Naive thymus-derived CD4-positive, alpha-beta T cell (primary cell): ENCODE measurements at regions of chr18 and their contacts with region 1.

Region 1: GRCh38 chr18:23503038-23503962 is at the start of gene RMC1:
- DNase-seq: peak; percentile 91 to 99 (median 95)
- ATAC-seq: peak; percentile 96
- H3K4me3 ChIP-seq: peak within 1 kb of the TSS; percentile 95
- H3K4me3 Mint-ChIP-seq: peak within 1 kb of the TSS; percentile 91 to 99 (median 96)
- H3K27ac ChIP-seq: peak within 1 kb of the TSS; percentile 88
- H3K27ac Mint-ChIP-seq: peak within 1 kb of the TSS; percentile 93 to 99 (median 96)
- H3K4me1 ChIP-seq: peaks cover 22% of the 10 kb centered on the region in 2 donors
- H3K4me1 Mint-ChIP-seq: peaks cover 28 to 70% (median 64%) of the 10 kb centered on the region in 7 donors
- H3K27me3 ChIP-seq: no peaks in the 10 kb centered on the region
- H3K27me3 Mint-ChIP-seq: no peaks in the 10 kb centered on the region
- total RNA-seq, gene RMC1: 45.7 to 59.7 (median 50.0) TPM

Region 2: DNA sequence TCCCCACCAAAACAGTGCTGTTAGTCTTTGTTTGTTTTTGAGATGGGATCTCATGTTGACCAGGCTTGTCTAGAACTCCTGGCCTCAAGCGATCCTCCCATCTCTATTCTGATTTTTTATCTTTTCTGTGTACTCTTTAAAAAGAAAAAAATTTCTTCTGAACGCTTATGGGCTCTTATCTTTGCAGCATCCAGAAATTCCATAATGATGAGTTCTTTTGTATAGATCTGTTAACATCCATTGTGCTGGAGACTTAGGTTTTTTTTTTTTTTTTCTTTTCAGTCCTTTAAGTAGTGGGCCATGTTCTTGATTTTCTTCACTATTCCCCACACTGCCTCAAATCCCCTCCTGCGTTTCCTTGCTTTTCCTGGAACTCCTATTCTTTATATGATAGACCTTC is 539.2 kb before region 1 on chr18:
- CTCF ChIA-PET with region 1: no interaction called
- POLR2A ChIA-PET with region 1: no interaction called
- intact Hi-C with region 1: no loop called
- DNase-seq: no peak
- ATAC-seq: no peak
- H3K4me3 ChIP-seq: no peak overlapping the region
- H3K4me3 Mint-ChIP-seq: no peak overlapping the region
- H3K27ac ChIP-seq: no peak overlapping the region
- H3K27ac Mint-ChIP-seq: peak overlapping the region in 1 of 9 donors; percentile 7
- H3K4me1 ChIP-seq: no peaks in the 10 kb centered on the region
- H3K4me1 Mint-ChIP-seq: peaks cover 0 to 12% (median 0%) of the 10 kb centered on the region in 7 donors
- H3K27me3 ChIP-seq: peaks cover 0 to 2% of the 10 kb centered on the region in 2 donors
- H3K27me3 Mint-ChIP-seq: no peaks in the 10 kb centered on the region

Region 3: DNA sequence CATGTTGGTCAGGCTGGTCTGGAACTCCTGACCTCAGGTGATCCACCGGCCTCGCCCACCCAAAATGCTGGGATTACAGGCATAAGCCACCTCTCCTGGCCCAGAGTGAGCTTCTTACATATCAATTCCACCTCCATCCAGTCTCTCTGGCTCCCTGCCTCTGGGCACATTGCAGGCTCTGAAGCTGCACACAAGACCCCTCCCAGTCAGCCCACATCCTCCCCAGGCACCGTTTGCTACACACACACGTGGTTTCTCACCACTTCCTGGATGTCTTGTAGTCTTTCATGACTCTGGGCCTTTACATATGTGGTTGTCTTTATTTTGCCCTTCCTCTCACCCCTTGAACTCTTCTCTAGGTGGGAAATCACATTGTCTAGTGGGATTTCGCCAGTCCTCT is 432.0 kb before region 1 on chr18:
- CTCF ChIA-PET with region 1: no interaction called
- POLR2A ChIA-PET with region 1: no interaction called
- intact Hi-C with region 1: loop called in 1 of 2 experiments (anchors 2 kb)
- DNase-seq: peak; percentile 49 to 94 (median 92)
- ATAC-seq: peak; percentile 99
- H3K4me3 ChIP-seq: peak overlapping the region; percentile 12
- H3K4me3 Mint-ChIP-seq: peak overlapping the region; percentile 73 to 91 (median 78)
- H3K27ac ChIP-seq: peak overlapping the region; percentile 18
- H3K27ac Mint-ChIP-seq: peak overlapping the region; percentile 69 to 94 (median 91)
- H3K4me1 ChIP-seq: peaks cover 44 to 50% of the 10 kb centered on the region in 2 donors
- H3K4me1 Mint-ChIP-seq: peaks cover 46 to 83% (median 77%) of the 10 kb centered on the region in 7 donors
- H3K27me3 ChIP-seq: no peaks in the 10 kb centered on the region
- H3K27me3 Mint-ChIP-seq: peaks cover 0 to 3% (median 0%) of the 10 kb centered on the region in 5 donors

Region 4: DNA sequence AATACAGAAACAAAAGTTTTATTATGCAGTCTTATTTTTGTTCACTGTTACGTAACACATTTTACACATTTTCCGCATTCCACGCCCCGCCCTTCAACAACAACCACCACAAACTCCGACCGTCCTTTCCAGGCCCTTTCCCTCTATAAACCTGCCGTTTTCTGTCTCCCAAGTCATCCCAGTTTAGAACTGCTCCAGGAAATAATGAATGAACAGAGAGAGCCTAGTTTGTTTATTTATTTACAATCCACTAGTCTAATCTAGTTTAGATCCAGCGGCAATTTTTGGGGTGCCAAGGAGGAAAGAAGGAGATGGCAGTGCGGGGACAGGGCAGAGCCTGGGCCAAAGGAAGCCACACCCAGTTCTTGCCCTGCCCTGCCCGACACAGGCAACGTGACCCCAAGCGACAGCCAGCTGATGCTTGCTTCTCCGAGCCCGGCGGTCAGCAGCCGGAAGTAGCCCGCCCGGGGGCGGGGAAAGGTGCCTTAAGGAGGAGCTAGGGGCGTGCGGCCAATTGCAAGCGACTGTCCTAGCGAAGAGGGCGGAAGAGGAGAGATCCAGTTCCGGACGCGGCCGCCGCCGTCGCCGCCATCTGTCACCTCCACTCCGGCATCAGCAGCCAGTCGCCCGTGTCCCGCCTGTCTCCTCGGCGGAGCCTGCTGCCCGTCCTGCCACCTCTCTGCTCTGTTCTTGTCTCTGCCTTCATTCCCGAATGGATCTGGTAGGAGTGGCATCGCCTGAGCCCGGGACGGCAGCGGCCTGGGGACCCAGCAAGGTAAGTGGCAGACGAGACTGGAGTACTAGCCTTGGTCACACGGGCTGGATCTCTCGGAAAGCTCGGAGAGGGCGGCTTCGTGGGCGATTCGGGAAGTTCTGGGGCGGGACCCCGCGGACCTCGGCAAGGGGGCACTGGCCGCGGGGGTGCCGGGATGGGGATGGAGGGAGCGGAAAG is 50.3 kb before region 1 on chr18 and contains the start of gene RIOK3:
- CTCF ChIA-PET with region 1: no interaction called
- POLR2A ChIA-PET with region 1: interaction called, 11 read pairs
- intact Hi-C with region 1: loop called (anchors 1 kb)
- DNase-seq: peak; percentile 68 to 96 (median 74)
- ATAC-seq: peak; percentile 97
- H3K4me3 ChIP-seq: peak within 1 kb of the TSS; percentile 82
- H3K4me3 Mint-ChIP-seq: peak within 1 kb of the TSS; percentile 92 to 100 (median 98)
- H3K27ac ChIP-seq: peak within 1 kb of the TSS; percentile 90
- H3K27ac Mint-ChIP-seq: peak within 1 kb of the TSS; percentile 91 to 99 (median 96)
- H3K4me1 ChIP-seq: peaks cover 13 to 25% of the 10 kb centered on the region in 2 donors
- H3K4me1 Mint-ChIP-seq: peaks cover 22 to 55% (median 47%) of the 10 kb centered on the region in 7 donors
- H3K27me3 ChIP-seq: no peaks in the 10 kb centered on the region
- H3K27me3 Mint-ChIP-seq: peaks cover 0 to 7% (median 0%) of the 10 kb centered on the region in 5 donors
- total RNA-seq, gene RIOK3: 74.0 to 153 (median 78.2) TPM

Region 5: GRCh38 chr18:23586249-23587196 is 83.2 kb after region 1 on chr18 and contains the start of gene NPC1:
- CTCF ChIA-PET with region 1: interaction called, 4 read pairs
- POLR2A ChIA-PET with region 1: interaction called, 12 read pairs
- intact Hi-C with region 1: loop called (anchors 1 kb)
- DNase-seq: peak; percentile 88 to 95 (median 93)
- ATAC-seq: peak; percentile 93
- H3K4me3 ChIP-seq: peak within 1 kb of the TSS; percentile 76
- H3K4me3 Mint-ChIP-seq: peak within 1 kb of the TSS; percentile 79 to 96 (median 92)
- H3K27ac ChIP-seq: peak within 1 kb of the TSS; percentile 100
- H3K27ac Mint-ChIP-seq: peak within 1 kb of the TSS; percentile 84 to 97 (median 94)
- H3K4me1 ChIP-seq: peaks cover 9 to 25% of the 10 kb centered on the region in 2 donors
- H3K4me1 Mint-ChIP-seq: peaks cover 25 to 45% (median 37%) of the 10 kb centered on the region in 7 donors
- H3K27me3 ChIP-seq: no peaks in the 10 kb centered on the region
- H3K27me3 Mint-ChIP-seq: peaks cover 0 to 13% (median 0%) of the 10 kb centered on the region in 5 donors
- total RNA-seq, gene NPC1: 29.2 to 49.3 (median 31.4) TPM

Region 6: GRCh38 chr18:23828426-23828825 is 325.1 kb after region 1 on chr18:
- CTCF ChIA-PET with region 1: no interaction called
- POLR2A ChIA-PET with region 1: no interaction called
- intact Hi-C with region 1: loop called (anchors 5 kb)
- DNase-seq: peak in 7 of 9 donors; percentile 13 to 74 (median 57)
- ATAC-seq: peak; percentile 99
- H3K4me3 ChIP-seq: no peak overlapping the region
- H3K4me3 Mint-ChIP-seq: peak overlapping the region in 1 of 10 donors; percentile 47
- H3K27ac ChIP-seq: no peak overlapping the region
- H3K27ac Mint-ChIP-seq: peak overlapping the region in 7 of 9 donors; percentile 2 to 86 (median 55)
- H3K4me1 ChIP-seq: peaks cover 0 to 10% of the 10 kb centered on the region in 2 donors
- H3K4me1 Mint-ChIP-seq: peaks cover 0 to 40% (median 23%) of the 10 kb centered on the region in 7 donors
- H3K27me3 ChIP-seq: no peaks in the 10 kb centered on the region
- H3K27me3 Mint-ChIP-seq: no peaks in the 10 kb centered on the region

Region 7: GRCh38 chr18:24118750-24119577 is 615.7 kb after region 1 on chr18:
- CTCF ChIA-PET with region 1: no interaction called
- POLR2A ChIA-PET with region 1: no interaction called
- intact Hi-C with region 1: loop called (anchors 5 kb)
- DNase-seq: peak; percentile 49 to 82 (median 74)
- ATAC-seq: peak; percentile 98
- H3K4me3 ChIP-seq: no peak overlapping the region
- H3K4me3 Mint-ChIP-seq: no peak overlapping the region
- H3K27ac ChIP-seq: no peak overlapping the region
- H3K27ac Mint-ChIP-seq: peak overlapping the region in 7 of 9 donors; percentile 2 to 82 (median 61)
- H3K4me1 ChIP-seq: peaks cover 0 to 6% of the 10 kb centered on the region in 2 donors
- H3K4me1 Mint-ChIP-seq: peaks cover 1 to 41% (median 22%) of the 10 kb centered on the region in 7 donors
- H3K27me3 ChIP-seq: no peaks in the 10 kb centered on the region
- H3K27me3 Mint-ChIP-seq: no peaks in the 10 kb centered on the region

Region 8: GRCh38 chr18:24633121-24633520 is 1129.8 kb after region 1 on chr18:
- CTCF ChIA-PET with region 1: no interaction called
- POLR2A ChIA-PET with region 1: no interaction called
- intact Hi-C with region 1: no loop called
- DNase-seq: no peak
- ATAC-seq: no peak
- H3K4me3 ChIP-seq: no peak overlapping the region
- H3K4me3 Mint-ChIP-seq: no peak overlapping the region
- H3K27ac ChIP-seq: no peak overlapping the region
- H3K27ac Mint-ChIP-seq: no peak overlapping the region
- H3K4me1 ChIP-seq: no peaks in the 10 kb centered on the region
- H3K4me1 Mint-ChIP-seq: no peaks in the 10 kb centered on the region
- H3K27me3 ChIP-seq: no peaks in the 10 kb centered on the region
- H3K27me3 Mint-ChIP-seq: peaks cover 0 to 15% (median 8%) of the 10 kb centered on the region in 5 donors